T-cell (primary cell): ENCODE measurements at regions of chr4 and their contacts with region 1.

Region 1: GRCh38 chr4:142615318-142615654 is 230.8 kb downstream of the INPP4B start:
- DNase-seq: no peak
- ATAC-seq: no peak
- H3K4me3 ChIP-seq: no peak overlapping the region
- H3K4me3 Mint-ChIP-seq: no peak overlapping the region
- H3K27ac ChIP-seq: no peak overlapping the region
- H3K27ac Mint-ChIP-seq: no peak overlapping the region
- H3K4me1 ChIP-seq: no peaks in the 10 kb centered on the region
- H3K4me1 Mint-ChIP-seq: peaks cover 0 to 5% (median 3%) of the 10 kb centered on the region in 3 donors
- H3K27me3 ChIP-seq: no peaks in the 10 kb centered on the region
- H3K27me3 Mint-ChIP-seq: no peaks in the 10 kb centered on the region

Region 2: GRCh38 chr4:142480244-142480643 is 135.0 kb before region 1 on chr4:
- CTCF ChIA-PET with region 1: no interaction called
- POLR2A ChIA-PET with region 1: interaction called in 1 of 2 experiments, 14 read pairs
- DNase-seq: no peak
- ATAC-seq: no peak
- H3K4me3 ChIP-seq: no peak overlapping the region
- H3K4me3 Mint-ChIP-seq: no peak overlapping the region
- H3K27ac ChIP-seq: no peak overlapping the region
- H3K27ac Mint-ChIP-seq: no peak overlapping the region
- H3K4me1 ChIP-seq: peaks cover 0 to 2% of the 10 kb centered on the region in 2 experiments
- H3K4me1 Mint-ChIP-seq: peaks cover 26 to 32% (median 28%) of the 10 kb centered on the region in 3 donors
- H3K27me3 ChIP-seq: no peaks in the 10 kb centered on the region
- H3K27me3 Mint-ChIP-seq: no peaks in the 10 kb centered on the region

Region 3: DNA sequence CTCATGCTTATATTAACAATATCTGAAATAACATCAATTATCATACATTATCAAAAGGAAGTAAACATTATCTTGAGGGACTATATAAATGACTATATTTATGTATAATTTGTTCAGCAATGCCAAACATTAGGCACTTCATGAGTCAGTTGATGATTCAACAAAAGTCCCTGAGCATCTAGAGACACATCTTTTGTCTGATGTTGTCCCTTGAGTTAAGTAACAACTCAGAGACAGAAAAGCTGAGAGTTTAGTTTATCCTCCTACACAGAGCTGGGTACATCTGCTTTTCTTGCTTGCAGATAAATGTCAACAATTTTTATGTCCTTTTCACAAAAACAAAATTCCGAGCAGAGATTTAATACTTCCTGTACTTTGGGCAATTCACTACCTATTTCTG is 80.3 kb before region 1 on chr4:
- CTCF ChIA-PET with region 1: no interaction called
- POLR2A ChIA-PET with region 1: no interaction called
- DNase-seq: no peak
- ATAC-seq: no peak
- H3K4me3 ChIP-seq: no peak overlapping the region
- H3K4me3 Mint-ChIP-seq: no peak overlapping the region
- H3K27ac ChIP-seq: no peak overlapping the region
- H3K27ac Mint-ChIP-seq: no peak overlapping the region
- H3K4me1 ChIP-seq: peaks cover 0 to 2% of the 10 kb centered on the region in 2 experiments
- H3K4me1 Mint-ChIP-seq: peaks cover 5 to 23% (median 9%) of the 10 kb centered on the region in 3 donors
- H3K27me3 ChIP-seq: no peaks in the 10 kb centered on the region
- H3K27me3 Mint-ChIP-seq: no peaks in the 10 kb centered on the region

Region 4: GRCh38 chr4:142547974-142548373 is 67.3 kb before region 1 on chr4:
- CTCF ChIA-PET with region 1: no interaction called
- POLR2A ChIA-PET with region 1: no interaction called
- DNase-seq: no peak
- ATAC-seq: no peak
- H3K4me3 ChIP-seq: no peak overlapping the region
- H3K4me3 Mint-ChIP-seq: no peak overlapping the region
- H3K27ac ChIP-seq: no peak overlapping the region
- H3K27ac Mint-ChIP-seq: peak overlapping the region in 1 of 2 donors; percentile 53
- H3K4me1 ChIP-seq: no peaks in the 10 kb centered on the region
- H3K4me1 Mint-ChIP-seq: peaks cover 42 to 47% (median 43%) of the 10 kb centered on the region in 3 donors
- H3K27me3 ChIP-seq: no peaks in the 10 kb centered on the region
- H3K27me3 Mint-ChIP-seq: no peaks in the 10 kb centered on the region

Region 5: DNA sequence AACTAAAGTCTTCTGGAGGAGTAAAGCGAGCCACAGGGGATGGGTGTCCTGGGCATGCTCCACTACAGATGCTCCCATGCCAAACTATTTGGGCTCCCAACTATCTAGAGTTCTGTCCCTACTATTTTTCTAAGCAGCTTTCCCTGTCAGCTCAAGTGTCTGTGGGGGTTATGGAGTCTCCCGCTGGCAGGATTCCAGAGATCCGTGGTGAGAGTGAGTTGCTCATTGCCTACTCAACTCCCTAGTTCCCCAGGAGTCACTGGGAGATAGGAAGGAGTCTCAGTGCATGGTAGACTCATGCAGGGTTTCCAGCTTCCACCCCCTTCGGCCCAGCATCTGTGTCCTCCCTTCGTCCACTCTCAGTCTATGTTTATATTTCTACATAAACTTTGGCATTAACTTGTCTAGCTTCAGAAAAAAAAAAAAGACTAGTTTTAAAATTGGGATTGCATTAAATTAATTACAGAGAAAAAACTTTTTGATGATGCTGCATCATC is 285.9 kb after region 1 on chr4:
- CTCF ChIA-PET with region 1: no interaction called
- POLR2A ChIA-PET with region 1: interaction called in 1 of 2 experiments, 11 read pairs
- DNase-seq: no peak
- ATAC-seq: no peak
- H3K4me3 ChIP-seq: no peak overlapping the region
- H3K4me3 Mint-ChIP-seq: no peak overlapping the region
- H3K27ac ChIP-seq: no peak overlapping the region
- H3K27ac Mint-ChIP-seq: no peak overlapping the region
- H3K4me1 ChIP-seq: no peaks in the 10 kb centered on the region
- H3K4me1 Mint-ChIP-seq: no peaks in the 10 kb centered on the region
- H3K27me3 ChIP-seq: no peaks in the 10 kb centered on the region
- H3K27me3 Mint-ChIP-seq: peaks cover 0 to 12% of the 10 kb centered on the region in 2 donors